ENCODE measurements at regions of chr17 and their contacts with region 1.

Region 1: GRCh38 chr17:58447039-58447975 is 30.0 kb upstream of the RNF43 start:
- DNase-seq: peak; percentile 65 to 78 (median 76)
- ATAC-seq: peak; percentile 96 to 99 (median 98)
- H3K4me3 ChIP-seq: no peak overlapping the region
- H3K27ac ChIP-seq: no peak overlapping the region
- H3K4me1 ChIP-seq: no peaks in the 10 kb centered on the region
- H3K27me3 ChIP-seq: no peaks in the 10 kb centered on the region
- CTCF ChIP-seq: peak; percentile 81 to 90 (median 82)
- POLR2A ChIP-seq: no peak

Region 2: DNA sequence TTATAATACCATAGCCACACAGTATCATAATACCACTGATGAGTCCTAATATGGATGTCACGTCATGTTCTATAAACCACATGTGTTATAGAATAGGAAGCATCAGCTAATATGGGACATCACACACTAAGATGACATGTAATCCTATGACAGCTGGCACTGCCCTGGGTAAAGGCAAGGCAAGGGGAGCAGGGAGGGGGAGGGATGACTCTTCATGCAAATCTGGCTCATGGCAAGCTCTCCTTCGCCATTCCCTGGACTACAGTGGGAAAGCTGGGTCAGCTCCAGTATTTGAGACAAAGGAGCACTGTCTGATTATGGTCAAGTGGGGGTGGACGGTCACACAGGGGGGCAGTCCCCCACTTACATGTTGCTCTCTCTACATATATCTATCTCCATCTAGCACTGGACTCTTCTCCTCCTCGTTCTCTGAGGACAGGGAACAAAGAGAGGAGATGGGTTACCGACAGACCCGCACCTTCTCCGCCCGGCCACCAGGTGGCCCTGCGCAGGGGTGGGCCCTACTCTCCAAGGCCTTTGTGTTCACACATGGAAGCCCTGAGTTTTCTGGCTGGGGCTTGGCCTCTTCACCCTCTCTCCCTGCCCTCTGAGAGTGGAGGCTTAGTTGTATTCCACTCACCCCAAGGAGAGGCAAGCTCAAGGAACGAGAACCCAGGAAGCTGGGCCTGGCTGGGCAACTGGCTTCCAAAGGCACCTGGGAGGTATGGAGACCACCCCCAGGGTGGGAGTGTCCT is 143.2 kb before region 1 on chr17:
- intact Hi-C with region 1: loop called in 1 of 2 experiments (anchors 5 kb)
- DNase-seq: peak in 2 of 3 donors; percentile 59 to 68
- ATAC-seq: peak; percentile 79 to 93 (median 90)
- H3K4me3 ChIP-seq: no peak overlapping the region
- H3K27ac ChIP-seq: no peak overlapping the region
- H3K4me1 ChIP-seq: no peaks in the 10 kb centered on the region
- H3K27me3 ChIP-seq: no peaks in the 10 kb centered on the region
- CTCF ChIP-seq: peak; percentile 54 to 81 (median 64)
- POLR2A ChIP-seq: no peak

Region 3: DNA sequence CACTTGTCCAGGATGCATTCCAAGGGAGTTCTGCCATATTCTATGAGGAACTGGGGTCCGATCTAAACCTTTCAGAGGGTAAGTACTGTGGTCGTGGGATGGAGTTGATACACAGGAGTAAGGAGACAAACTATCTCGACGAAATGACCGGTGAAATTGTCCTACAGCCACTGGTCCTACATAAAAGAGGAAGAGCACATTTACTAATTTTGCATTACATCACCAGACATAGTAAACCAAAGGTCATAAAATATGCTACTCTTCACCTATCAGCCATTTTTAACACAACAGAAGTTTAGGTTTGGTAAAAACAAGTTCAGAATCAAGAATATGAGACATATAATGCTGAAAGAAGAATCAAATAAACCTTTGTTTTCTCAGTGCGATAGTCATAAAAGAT is 32.8 kb after region 1 on chr17:
- intact Hi-C with region 1: no loop called
- DNase-seq: no peak
- ATAC-seq: no peak
- H3K4me3 ChIP-seq: no peak overlapping the region
- H3K27ac ChIP-seq: no peak overlapping the region
- H3K4me1 ChIP-seq: peaks cover 0 to 4% (median 0%) of the 10 kb centered on the region in 4 donors
- H3K27me3 ChIP-seq: no peaks in the 10 kb centered on the region
- CTCF ChIP-seq: no peak
- POLR2A ChIP-seq: no peak

Region 4: DNA sequence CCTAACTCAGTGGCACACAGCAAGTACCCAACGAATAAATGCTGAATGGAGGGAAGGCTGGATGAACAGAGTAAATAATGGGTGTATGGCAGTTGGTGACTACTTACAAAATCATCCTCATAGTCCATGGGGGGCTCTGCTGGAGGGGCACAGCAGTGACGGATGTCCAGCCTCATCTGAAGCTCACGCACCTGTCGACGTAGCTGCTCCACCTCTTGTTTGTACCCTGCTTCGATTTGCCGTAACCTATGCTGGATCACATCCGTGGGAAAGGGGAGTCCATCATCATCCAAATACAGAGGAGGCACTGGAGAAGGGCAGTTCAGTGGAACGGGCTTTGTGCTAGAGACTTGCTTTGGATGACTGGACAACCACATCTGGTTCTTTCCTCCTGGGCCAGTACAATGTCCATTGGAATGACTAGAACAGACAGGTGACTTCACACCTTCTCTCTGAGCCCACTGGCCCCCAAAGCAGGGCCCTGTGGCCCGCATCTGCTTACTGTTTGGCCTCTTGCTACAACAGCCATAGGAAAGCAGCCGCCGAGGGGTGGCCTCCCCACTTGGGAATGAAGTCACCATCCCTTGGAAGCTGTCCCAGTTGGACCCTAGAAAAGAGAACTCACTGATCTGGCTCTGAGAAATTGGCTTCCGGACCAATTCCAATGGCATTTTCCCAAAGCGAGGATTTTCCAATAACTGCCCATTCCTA is 47.7 kb after region 1 on chr17:
- intact Hi-C with region 1: no loop called
- DNase-seq: no peak
- ATAC-seq: peak in 1 of 4 donors; percentile 21
- H3K4me3 ChIP-seq: no peak overlapping the region
- H3K27ac ChIP-seq: no peak overlapping the region
- H3K4me1 ChIP-seq: no peaks in the 10 kb centered on the region
- H3K27me3 ChIP-seq: no peaks in the 10 kb centered on the region
- CTCF ChIP-seq: no peak
- POLR2A ChIP-seq: no peak

Measured in right lobe of liver (tissue), 6 donors.